Cardiac septum (tissue), 1 donor: ENCODE measurements at regions of chr3 and their contacts with region 1.

Region 1: GRCh38 chr3:50327943-50328691 is at the start of gene TUSC2:
- DNase-seq: peak; percentile 99
- total RNA-seq, gene TUSC2: 24.5 TPM

Region 2: GRCh38 chr3:49626101-49626581 is 702.0 kb before region 1 on chr3:
- intact Hi-C with region 1: no loop called
- DNase-seq: no peak

Region 3: DNA sequence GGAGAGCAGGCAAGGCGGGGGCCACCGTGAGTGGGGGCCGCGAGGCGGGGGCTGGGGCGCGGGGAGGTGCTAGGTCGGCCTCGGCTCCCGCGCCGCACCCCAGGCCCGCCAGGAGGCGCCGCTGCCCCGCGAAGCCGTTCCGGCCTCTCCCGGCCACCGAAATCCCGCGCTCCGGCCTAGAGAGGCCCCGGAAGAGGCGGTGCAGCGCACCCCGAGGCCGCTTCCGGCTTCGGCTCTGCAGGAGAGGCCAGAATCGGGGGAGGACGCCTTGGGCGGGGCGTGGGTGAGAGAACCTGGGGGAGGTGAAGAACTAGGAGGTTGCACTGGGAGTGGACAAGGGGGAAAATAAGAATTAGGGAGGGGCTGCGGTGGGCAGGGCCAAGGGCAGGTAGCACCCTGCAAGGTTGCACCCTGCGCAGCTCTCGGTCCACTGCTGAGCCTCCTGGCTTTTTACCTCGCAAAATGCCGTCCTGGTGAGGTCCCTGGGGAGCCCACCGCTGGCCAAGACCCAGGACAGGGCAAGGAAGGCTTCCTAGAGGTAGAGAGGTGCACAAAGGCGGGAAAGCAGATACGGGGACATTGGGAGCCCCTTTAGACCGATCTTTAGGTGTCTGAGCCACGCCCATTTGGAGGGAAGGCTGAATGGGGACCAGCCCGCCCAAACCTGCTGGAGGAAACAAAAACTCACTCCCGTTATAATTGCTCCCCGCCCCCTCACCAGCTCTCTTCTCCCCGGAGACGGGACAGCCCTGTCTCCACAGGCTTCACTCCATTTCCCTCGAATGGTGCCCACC is 100.5 kb before region 1 on chr3:
- intact Hi-C with region 1: no loop called
- DNase-seq: peak; percentile 96

Region 4: GRCh38 chr3:50286322-50287230 is 41.5 kb before region 1 on chr3:
- intact Hi-C with region 1: loop called (anchors 5 kb)
- DNase-seq: no peak